ENCODE measurements at regions of chr5 and their contacts with region 1.

Region 1: DNA sequence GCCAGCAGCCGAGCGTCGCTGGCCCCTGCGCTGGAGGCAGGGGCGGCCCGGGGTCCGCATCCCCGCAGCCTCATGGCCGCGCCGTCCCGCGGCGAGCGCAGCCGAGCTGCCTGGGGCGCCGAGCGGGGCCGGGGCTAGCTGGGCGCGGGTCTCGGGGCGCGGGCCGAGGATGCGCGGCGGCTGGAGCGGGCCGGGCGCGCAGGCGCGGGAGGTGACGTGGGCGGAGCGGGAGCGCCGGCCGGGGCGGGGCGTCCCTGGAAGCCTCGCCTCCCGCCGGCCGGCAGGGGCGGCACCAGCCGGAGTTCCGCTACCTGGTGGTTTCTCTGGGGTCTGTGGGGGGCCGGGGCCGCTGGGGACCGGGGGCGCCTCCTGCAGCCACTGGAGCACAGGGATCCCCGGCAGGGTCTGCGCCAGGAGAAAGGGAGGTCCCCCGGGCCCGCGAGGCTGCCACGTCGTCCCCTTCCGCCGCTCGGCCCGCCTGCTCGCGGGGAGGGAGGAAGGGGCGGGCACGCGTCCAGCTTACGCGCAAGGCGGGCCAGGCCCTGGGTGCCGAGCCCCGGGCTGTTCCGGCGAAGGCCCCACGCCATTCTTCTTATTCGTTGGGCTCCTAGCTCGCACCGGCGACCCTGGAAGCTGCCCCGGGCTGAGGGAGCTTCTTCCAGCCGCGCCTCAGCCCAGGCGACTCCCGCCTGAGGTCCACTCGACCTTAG is at the start of gene LPCAT1:
- DNase-seq: peak; percentile 38 to 89 (median 70)
- ATAC-seq: peak; percentile 90
- H3K4me3 ChIP-seq: peak within 1 kb of the TSS; percentile 56
- H3K4me3 Mint-ChIP-seq: peak within 1 kb of the TSS; percentile 90
- H3K27ac ChIP-seq: peak within 1 kb of the TSS; percentile 40 to 66
- H3K27ac Mint-ChIP-seq: peak within 1 kb of the TSS; percentile 79
- H3K4me1 ChIP-seq: peaks cover 37% of the 10 kb centered on the region
- H3K4me1 Mint-ChIP-seq: peaks cover 24% of the 10 kb centered on the region
- H3K27me3 ChIP-seq: no peaks in the 10 kb centered on the region
- H3K27me3 Mint-ChIP-seq: no peaks in the 10 kb centered on the region
- CTCF ChIP-seq: no peak
- total RNA-seq, gene LPCAT1: 20.4 to 21.2 TPM

Region 2: GRCh38 chr5:1105350-1106265 is 418.3 kb before region 1 on chr5:
- CTCF ChIA-PET with region 1: no interaction called
- POLR2A ChIA-PET with region 1: no interaction called
- intact Hi-C with region 1: loop called in 1 of 2 experiments (anchors 5 kb)
- DNase-seq: peak in 13 of 14 experiments; percentile 16 to 93 (median 53)
- ATAC-seq: peak; percentile 77
- H3K4me3 ChIP-seq: peak overlapping the region; percentile 52
- H3K4me3 Mint-ChIP-seq: peak overlapping the region; percentile 91
- H3K27ac ChIP-seq: peak overlapping the region; percentile 62 to 81
- H3K27ac Mint-ChIP-seq: peak overlapping the region; percentile 99
- H3K4me1 ChIP-seq: peaks cover 100% of the 10 kb centered on the region
- H3K4me1 Mint-ChIP-seq: peaks cover 87% of the 10 kb centered on the region
- H3K27me3 ChIP-seq: no peaks in the 10 kb centered on the region
- H3K27me3 Mint-ChIP-seq: no peaks in the 10 kb centered on the region
- CTCF ChIP-seq: no peak

Region 3: DNA sequence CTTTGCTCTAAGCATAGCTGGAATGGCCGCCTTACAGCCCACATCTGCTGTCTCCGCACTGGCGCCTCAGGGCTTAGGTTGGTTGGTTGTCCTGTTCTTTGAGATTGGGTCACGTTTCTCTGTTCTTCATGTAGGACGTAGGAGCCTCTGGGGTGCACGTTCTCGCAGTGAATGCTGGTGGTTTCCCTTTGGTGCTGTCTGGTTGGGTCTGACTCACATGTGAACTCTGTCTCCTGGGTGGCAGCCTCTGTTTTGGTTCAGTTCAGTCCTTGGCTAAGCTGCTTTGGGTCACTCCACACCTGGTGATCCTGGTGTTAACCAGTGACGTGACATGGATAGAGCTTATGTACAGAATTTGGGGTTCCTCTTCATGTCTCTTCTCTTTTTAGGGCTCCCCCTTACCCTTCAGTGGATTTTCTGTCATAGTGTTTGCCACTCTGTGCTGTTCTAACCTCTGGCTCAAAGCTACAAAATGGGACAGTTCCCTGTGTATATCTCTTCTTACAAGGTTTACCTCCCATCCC is 12.5 kb after region 1 on chr5:
- CTCF ChIA-PET with region 1: interaction called, 3 read pairs
- POLR2A ChIA-PET with region 1: interaction called, 20 read pairs
- intact Hi-C with region 1: no loop called
- DNase-seq: peak; percentile 53 to 91 (median 65)
- ATAC-seq: peak; percentile 96
- H3K4me3 ChIP-seq: peak overlapping the region; percentile 39
- H3K4me3 Mint-ChIP-seq: peak overlapping the region; percentile 72
- H3K27ac ChIP-seq: peak overlapping the region; percentile 63 to 81
- H3K27ac Mint-ChIP-seq: peak overlapping the region; percentile 89
- H3K4me1 ChIP-seq: peaks cover 10% of the 10 kb centered on the region
- H3K4me1 Mint-ChIP-seq: peaks cover 23% of the 10 kb centered on the region
- H3K27me3 ChIP-seq: no peaks in the 10 kb centered on the region
- H3K27me3 Mint-ChIP-seq: no peaks in the 10 kb centered on the region
- CTCF ChIP-seq: no peak

Region 4: GRCh38 chr5:1666812-1667588 is 143.1 kb after region 1 on chr5:
- CTCF ChIA-PET with region 1: no interaction called
- POLR2A ChIA-PET with region 1: no interaction called
- intact Hi-C with region 1: no loop called
- DNase-seq: peak; percentile 26 to 64 (median 40)
- ATAC-seq: peak; percentile 70
- H3K4me3 ChIP-seq: no peak overlapping the region
- H3K4me3 Mint-ChIP-seq: peak overlapping the region; percentile 27
- H3K27ac ChIP-seq: no peak overlapping the region
- H3K27ac Mint-ChIP-seq: no peak overlapping the region
- H3K4me1 ChIP-seq: peaks cover 17% of the 10 kb centered on the region
- H3K4me1 Mint-ChIP-seq: peaks cover 18% of the 10 kb centered on the region
- H3K27me3 ChIP-seq: peaks cover 54 to 62% of the 10 kb centered on the region in 2 experiments
- H3K27me3 Mint-ChIP-seq: peaks cover 81% of the 10 kb centered on the region
- CTCF ChIP-seq: no peak

Region 5: GRCh38 chr5:1792842-1793266 is 268.9 kb after region 1 on chr5:
- CTCF ChIA-PET with region 1: no interaction called
- POLR2A ChIA-PET with region 1: no interaction called
- intact Hi-C with region 1: loop called in 1 of 2 experiments (anchors 5 kb)
- DNase-seq: peak; percentile 51 to 89 (median 70)
- ATAC-seq: peak; percentile 97
- H3K4me3 ChIP-seq: peak overlapping the region; percentile 34
- H3K4me3 Mint-ChIP-seq: peak overlapping the region; percentile 73
- H3K27ac ChIP-seq: peak overlapping the region; percentile 50 to 55
- H3K27ac Mint-ChIP-seq: peak overlapping the region; percentile 86
- H3K4me1 ChIP-seq: peaks cover 61% of the 10 kb centered on the region
- H3K4me1 Mint-ChIP-seq: peaks cover 53% of the 10 kb centered on the region
- H3K27me3 ChIP-seq: no peaks in the 10 kb centered on the region
- H3K27me3 Mint-ChIP-seq: no peaks in the 10 kb centered on the region
- CTCF ChIP-seq: no peak

Measured in CD4-positive, alpha-beta T cell (primary cell).